ENCODE measurements at regions of chr13 and their contacts with region 1.

Region 1: DNA sequence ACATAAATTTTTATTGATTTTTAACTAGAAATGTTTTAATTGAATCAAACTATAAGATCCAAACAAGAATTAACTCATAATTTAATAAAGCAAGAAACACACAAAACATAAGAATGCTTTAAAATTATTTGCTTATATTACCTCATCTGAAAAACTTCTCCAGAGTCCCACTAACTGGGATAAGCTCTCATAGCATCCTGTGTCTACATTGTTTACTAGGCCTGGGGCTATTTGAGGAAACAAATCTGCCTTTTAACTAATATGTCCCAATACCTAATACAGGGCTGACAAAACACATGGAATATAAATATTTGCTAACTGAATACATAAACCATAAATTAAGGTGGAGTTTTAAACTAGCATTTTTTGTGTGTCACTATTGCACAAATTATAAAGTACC is 1399.8 kb upstream of the SLC10A2 start:
- DNase-seq: peak; percentile 66
- ATAC-seq: peak; percentile 100
- H3K4me3 ChIP-seq: no peak overlapping the region
- H3K27ac ChIP-seq: no peak overlapping the region; the same call in 1 of the 2 replicates
- H3K4me1 ChIP-seq: peaks cover 3% of the 10 kb centered on the region; the same call in 1 of the 2 replicates
- H3K27me3 ChIP-seq: no peaks in the 10 kb centered on the region
- CTCF ChIP-seq: no peak

Region 2: DNA sequence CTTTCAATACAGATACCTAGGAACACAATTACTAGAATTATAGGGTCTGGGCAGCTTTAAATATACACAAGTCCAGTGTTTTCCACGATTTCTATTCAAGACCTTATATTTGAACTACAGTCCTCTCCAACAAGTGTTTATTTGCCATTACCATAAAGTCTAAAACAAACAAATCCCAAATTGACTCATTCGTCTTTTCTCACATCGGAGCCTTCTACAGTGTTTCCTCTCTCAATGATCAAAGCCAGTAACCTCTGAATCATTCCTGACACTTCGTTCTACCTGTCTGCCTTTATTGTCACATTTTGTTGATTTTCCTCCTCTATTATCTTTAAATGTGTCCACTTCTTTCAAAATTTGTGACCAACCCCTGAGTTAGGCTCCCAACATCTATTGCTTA is 43.3 kb before region 1 on chr13:
- CTCF ChIA-PET with region 1: no interaction called
- POLR2A ChIA-PET with region 1: no interaction called
- intact Hi-C with region 1: loop called (anchors 1 kb)
- DNase-seq: peak; percentile 34
- ATAC-seq: peak; percentile 89
- H3K4me3 ChIP-seq: no peak overlapping the region
- H3K27ac ChIP-seq: no peak overlapping the region
- H3K4me1 ChIP-seq: peaks cover 6% of the 10 kb centered on the region; the same call in 1 of the 2 replicates
- H3K27me3 ChIP-seq: no peaks in the 10 kb centered on the region
- CTCF ChIP-seq: no peak

Measured in PC-3 (cell line).